ENCODE measurements at regions of chr15 and their contacts with region 1.

Region 1: DNA sequence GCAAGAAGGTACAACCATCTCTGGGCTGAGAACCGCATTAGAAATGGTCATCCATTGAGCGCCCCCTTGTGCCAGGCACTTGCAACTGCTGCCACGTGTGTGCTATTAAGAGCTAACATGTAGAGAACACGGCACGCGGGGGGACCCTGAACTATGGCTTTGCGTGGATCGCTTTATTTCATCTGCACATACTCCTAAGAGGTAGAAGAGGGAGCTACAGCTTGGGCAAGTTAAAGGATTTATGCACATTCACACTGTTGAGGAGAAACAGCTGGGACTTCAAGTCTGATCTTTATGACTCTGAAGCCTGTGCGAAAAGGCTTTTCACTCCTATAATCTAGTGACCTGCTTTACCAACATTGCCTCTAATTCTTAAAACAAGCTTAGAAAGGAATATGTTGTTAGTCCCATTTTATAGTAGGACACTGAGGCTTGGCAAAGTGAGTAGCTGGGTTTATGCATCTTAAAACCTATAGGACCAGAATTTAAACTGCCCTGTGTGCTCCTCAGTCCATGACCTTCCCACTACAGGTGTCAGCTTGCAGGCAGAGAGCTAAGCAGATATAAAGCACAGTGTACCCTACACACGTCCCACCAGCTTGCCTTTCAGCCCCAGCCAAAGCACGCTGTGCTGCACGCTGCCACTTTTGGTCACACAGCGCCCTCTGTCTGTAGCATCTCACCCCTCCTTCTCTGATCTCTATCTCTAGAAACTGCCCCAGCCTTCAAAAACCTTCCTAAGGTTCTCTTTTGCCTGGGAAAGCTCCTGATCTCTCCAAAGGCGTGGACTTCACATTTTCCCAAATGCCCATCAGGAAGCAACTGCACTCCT is 57.8 kb downstream of the STARD5 start:
- DNase-seq: peak; percentile 88

Region 2: GRCh38 chr15:80776420-80777045 is 489.6 kb before region 1 on chr15:
- CTCF ChIA-PET with region 1: interaction called, 14 read pairs
- POLR2A ChIA-PET with region 1: no interaction called
- DNase-seq: peak; percentile 75

Region 3: DNA sequence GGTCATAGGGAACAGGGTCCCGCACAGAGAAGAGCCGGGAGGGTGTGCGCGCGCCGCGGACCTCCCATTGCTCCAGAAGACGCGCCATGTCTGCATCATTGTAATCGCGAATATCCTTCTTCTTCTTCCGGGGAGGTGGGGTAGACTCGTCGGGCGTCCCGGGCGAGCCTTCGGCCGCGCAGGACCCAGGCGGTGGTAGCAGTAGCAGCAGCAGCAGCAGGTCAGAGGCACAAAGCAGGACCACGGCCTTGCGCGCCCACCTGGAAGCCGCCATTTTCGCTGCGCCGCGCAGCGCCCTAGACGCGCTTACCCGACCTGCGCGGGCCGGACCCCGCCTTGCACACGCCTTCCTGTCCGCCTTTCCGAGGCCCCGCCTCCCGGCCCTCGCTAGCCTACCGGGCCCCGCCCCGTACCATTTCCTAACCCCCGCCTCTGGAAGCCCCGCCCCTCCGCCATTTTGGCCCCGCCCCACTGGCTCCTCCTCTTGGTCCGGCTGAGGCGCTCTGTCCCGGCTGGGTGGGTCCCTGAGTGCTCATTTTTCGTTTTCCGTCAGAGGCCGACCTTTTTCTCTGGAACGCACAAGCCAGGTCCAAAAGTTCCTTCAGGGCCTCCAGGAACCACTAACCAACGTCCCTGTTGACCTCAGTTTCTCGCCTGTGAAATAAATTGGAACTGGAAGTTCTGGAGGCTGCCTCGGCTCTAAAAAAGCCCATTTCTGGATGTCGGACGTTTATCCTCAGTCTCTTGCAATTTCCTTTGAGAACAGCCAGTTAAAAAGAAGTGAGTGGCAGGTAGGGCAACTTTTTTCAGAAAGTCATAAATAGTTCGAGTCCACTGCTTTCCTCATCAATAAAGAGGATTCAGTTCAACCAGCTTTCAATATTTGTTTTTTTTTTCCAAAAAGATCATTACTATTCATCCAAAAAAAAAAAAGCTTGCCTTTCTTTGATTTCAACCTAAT is 276.4 kb before region 1 on chr15 and contains the start of gene MESD:
- CTCF ChIA-PET with region 1: interaction called, 14 read pairs
- POLR2A ChIA-PET with region 1: interaction called, 3 read pairs
- DNase-seq: peak; percentile 100

Region 4: GRCh38 chr15:81106560-81106959 is 159.6 kb before region 1 on chr15:
- CTCF ChIA-PET with region 1: interaction called, 100 read pairs
- POLR2A ChIA-PET with region 1: no interaction called
- DNase-seq: peak; percentile 71

Region 5: GRCh38 chr15:81155375-81156218 is 110.6 kb before region 1 on chr15:
- CTCF ChIA-PET with region 1: interaction called, 107 read pairs
- POLR2A ChIA-PET with region 1: interaction called, 8 read pairs
- DNase-seq: peak; percentile 57

Region 6: DNA sequence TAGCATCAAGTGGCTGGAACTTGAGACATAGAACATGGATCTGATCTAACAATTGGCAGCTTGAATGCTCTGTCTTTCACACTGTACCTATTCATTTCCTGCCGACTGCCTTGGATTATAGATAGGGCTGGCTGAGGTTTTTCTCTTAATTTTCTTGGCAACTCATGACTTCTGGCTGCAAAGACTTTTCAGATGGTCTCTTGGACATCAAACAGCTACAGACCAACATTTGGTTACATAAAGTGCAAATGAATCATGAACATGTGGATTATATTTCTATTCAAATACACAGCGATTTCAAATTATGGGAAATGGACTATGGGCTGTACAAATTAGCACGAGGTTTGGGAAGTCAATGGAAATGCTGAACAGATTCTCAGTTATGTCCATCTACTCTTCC is 95.6 kb before region 1 on chr15:
- CTCF ChIA-PET with region 1: interaction called, 13 read pairs
- POLR2A ChIA-PET with region 1: no interaction called
- DNase-seq: no peak

Region 7: DNA sequence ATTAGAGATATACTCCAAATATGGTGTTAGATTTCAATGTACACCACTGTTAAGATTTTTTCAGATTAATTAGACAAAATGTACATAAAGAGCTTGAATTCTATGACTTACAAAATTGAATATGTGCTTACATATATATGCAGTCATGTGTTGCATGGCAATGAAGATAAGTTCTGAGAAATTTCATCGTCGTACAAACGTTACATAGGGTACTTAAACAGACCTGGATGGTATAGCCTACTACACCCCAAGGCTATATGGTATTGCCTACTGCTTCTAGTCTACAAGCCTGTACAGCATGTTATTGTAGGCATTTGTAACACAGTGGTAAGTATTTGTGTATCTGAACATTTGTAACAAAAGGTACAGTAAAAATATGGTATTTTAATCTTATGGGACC is 60.1 kb before region 1 on chr15:
- CTCF ChIA-PET with region 1: no interaction called
- POLR2A ChIA-PET with region 1: no interaction called
- DNase-seq: no peak

Region 8: GRCh38 chr15:81254277-81254915 is 11.8 kb before region 1 on chr15:
- CTCF ChIA-PET with region 1: interaction called, 11 read pairs
- POLR2A ChIA-PET with region 1: no interaction called
- DNase-seq: no peak

Measured in HEK293T (cell line).